CD8-positive, alpha-beta T cell (primary cell): ENCODE measurements at regions of chr7 and their contacts with region 1.

Region 1: GRCh38 chr7:53835301-53835700 is 706.9 kb upstream of the VSTM2A start:
- DNase-seq: no peak
- ATAC-seq: no peak
- H3K4me3 ChIP-seq: no peak overlapping the region
- H3K4me3 Mint-ChIP-seq: no peak overlapping the region
- H3K27ac ChIP-seq: no peak overlapping the region
- H3K27ac Mint-ChIP-seq: no peak overlapping the region
- H3K4me1 ChIP-seq: no peaks in the 10 kb centered on the region
- H3K4me1 Mint-ChIP-seq: no peaks in the 10 kb centered on the region
- H3K27me3 ChIP-seq: no peaks in the 10 kb centered on the region
- H3K27me3 Mint-ChIP-seq: no peaks in the 10 kb centered on the region
- CTCF ChIP-seq: no peak

Region 2: GRCh38 chr7:53035499-53036412 is 799.5 kb before region 1 on chr7 and contains the start of gene POM121L12:
- CTCF ChIA-PET with region 1: no interaction called
- POLR2A ChIA-PET with region 1: no interaction called
- intact Hi-C with region 1: loop called in 1 of 2 experiments (anchors 5 kb)
- DNase-seq: no peak
- ATAC-seq: no peak
- H3K4me3 ChIP-seq: no peak within 1 kb of the TSS
- H3K4me3 Mint-ChIP-seq: no peak within 1 kb of the TSS
- H3K27ac ChIP-seq: no peak within 1 kb of the TSS
- H3K27ac Mint-ChIP-seq: no peak within 1 kb of the TSS
- H3K4me1 ChIP-seq: no peaks in the 10 kb centered on the region
- H3K4me1 Mint-ChIP-seq: no peaks in the 10 kb centered on the region
- H3K27me3 ChIP-seq: no peaks in the 10 kb centered on the region
- H3K27me3 Mint-ChIP-seq: no peaks in the 10 kb centered on the region
- CTCF ChIP-seq: no peak
- total RNA-seq, gene POM121L12: not detected

Region 3: DNA sequence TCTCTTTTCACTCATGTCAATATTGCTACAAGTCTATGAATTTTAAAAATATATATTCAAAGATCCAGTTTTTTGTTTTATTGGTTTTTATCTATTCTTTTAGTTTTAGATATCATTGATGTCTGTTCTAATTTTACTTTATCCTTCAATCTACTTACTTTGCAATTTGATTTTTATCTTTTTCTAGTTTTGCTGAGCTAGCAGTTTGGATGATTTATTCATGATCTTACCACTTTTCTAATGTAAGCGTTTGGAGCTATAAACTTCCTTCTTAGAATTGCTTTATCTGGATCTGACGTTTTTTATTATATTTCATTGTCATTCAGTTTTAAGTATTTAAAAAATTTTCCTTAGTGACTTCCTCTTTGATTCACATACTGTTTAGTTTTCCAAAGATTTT is 42.4 kb after region 1 on chr7:
- CTCF ChIA-PET with region 1: no interaction called
- POLR2A ChIA-PET with region 1: no interaction called
- intact Hi-C with region 1: loop called in 1 of 2 experiments (anchors 5 kb)
- DNase-seq: no peak
- ATAC-seq: no peak
- H3K4me3 ChIP-seq: no peak overlapping the region
- H3K4me3 Mint-ChIP-seq: no peak overlapping the region
- H3K27ac ChIP-seq: no peak overlapping the region
- H3K27ac Mint-ChIP-seq: no peak overlapping the region
- H3K4me1 ChIP-seq: no peaks in the 10 kb centered on the region
- H3K4me1 Mint-ChIP-seq: no peaks in the 10 kb centered on the region
- H3K27me3 ChIP-seq: no peaks in the 10 kb centered on the region
- H3K27me3 Mint-ChIP-seq: no peaks in the 10 kb centered on the region
- CTCF ChIP-seq: no peak